RWPE1 (cell line): ENCODE measurements at regions of chr19 and their contacts with region 1.

Region 1: GRCh38 chr19:2887391-2887914 is 13.3 kb upstream of the ZNF57 start:
- DNase-seq: peak; percentile 63
- H3K27ac ChIP-seq: peak overlapping the region; percentile 49; the same call in 1 of the 2 replicates
- CTCF ChIP-seq: peak; percentile 78

Region 2: GRCh38 chr19:2950286-2951124 is 63.1 kb after region 1 on chr19:
- CTCF ChIA-PET with region 1: interaction called, 10 read pairs
- POLR2A ChIA-PET with region 1: no interaction called
- DNase-seq: peak; percentile 100
- H3K27ac ChIP-seq: peak overlapping the region; percentile 89
- CTCF ChIP-seq: no peak